ENCODE measurements at regions of chr14 and their contacts with region 1.

Region 1: GRCh38 chr14:96538097-96538989 is 36.2 kb downstream of the PAPOLA start:
- DNase-seq: no peak
- ATAC-seq: no peak
- H3K4me3 ChIP-seq: no peak overlapping the region
- H3K27ac ChIP-seq: no peak overlapping the region; the same call in 1 of the 2 replicates
- H3K4me1 ChIP-seq: no peaks in the 10 kb centered on the region
- H3K27me3 ChIP-seq: no peaks in the 10 kb centered on the region
- CTCF ChIP-seq: no peak
- EP300 ChIP-seq: no peak
- POLR2A ChIP-seq: no peak
- RAD21 ChIP-seq: no peak

Region 2: GRCh38 chr14:96409701-96410100 is 128.6 kb before region 1 on chr14:
- CTCF ChIA-PET with region 1: no interaction called
- POLR2A ChIA-PET with region 1: no interaction called
- RAD21 ChIA-PET with region 1: no interaction called
- SMC1A ChIA-PET with region 1: no interaction called
- in situ Hi-C with region 1: no loop called
- intact Hi-C with region 1: no loop called
- DNase-seq: no peak
- ATAC-seq: no peak
- H3K4me3 ChIP-seq: no peak overlapping the region
- H3K27ac ChIP-seq: no peak overlapping the region
- H3K4me1 ChIP-seq: no peaks in the 10 kb centered on the region
- H3K27me3 ChIP-seq: no peaks in the 10 kb centered on the region
- CTCF ChIP-seq: no peak
- EP300 ChIP-seq: no peak
- POLR2A ChIP-seq: no peak
- RAD21 ChIP-seq: no peak

Region 3: DNA sequence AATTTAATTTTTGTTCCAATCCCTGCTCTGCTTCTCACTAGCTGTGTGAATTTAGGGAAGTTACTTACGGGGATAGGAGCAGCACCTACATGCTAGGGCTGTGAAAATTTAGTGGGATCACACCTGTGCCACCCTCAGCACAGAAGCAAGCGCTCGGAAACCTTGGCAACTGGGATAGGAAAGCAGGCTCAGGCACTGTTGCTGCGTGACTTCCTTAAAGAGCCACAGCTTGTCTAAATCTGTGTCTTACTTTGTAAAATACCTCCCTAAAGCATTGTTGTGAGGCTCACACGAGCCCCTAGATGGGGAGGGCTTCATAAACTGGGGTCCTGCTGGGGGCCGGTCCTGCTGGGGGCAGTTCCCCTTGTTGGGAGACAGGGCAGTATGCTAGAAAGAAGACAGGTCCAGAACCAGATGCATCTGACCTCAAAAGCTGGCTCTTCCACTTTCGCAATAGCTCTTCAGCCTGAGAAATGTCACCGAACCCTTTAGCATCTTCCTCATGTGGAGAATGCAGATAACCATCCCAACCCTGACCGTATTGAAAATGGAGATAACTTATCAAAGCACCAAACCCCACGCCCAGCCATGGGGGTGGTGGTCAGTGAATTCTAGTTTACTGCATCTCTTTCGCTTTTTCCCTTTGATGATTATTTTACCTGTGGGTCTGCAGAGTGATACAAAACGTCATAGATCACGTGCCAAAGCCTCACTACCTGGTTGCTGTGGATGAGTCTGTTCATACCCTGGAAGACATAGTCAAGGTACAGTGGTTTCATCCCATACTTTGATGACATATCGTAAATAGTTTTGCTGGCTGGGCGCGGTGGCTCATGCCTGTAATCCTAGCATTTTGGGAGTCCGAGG is 92.3 kb before region 1 on chr14:
- CTCF ChIA-PET with region 1: no interaction called
- POLR2A ChIA-PET with region 1: no interaction called
- RAD21 ChIA-PET with region 1: no interaction called
- SMC1A ChIA-PET with region 1: no interaction called
- in situ Hi-C with region 1: no loop called
- intact Hi-C with region 1: no loop called
- DNase-seq: no peak
- ATAC-seq: no peak
- H3K4me3 ChIP-seq: no peak overlapping the region
- H3K27ac ChIP-seq: no peak overlapping the region
- H3K4me1 ChIP-seq: no peaks in the 10 kb centered on the region
- H3K27me3 ChIP-seq: no peaks in the 10 kb centered on the region; a peak in 1 of 4 replicates
- CTCF ChIP-seq: no peak
- EP300 ChIP-seq: no peak
- POLR2A ChIP-seq: no peak
- RAD21 ChIP-seq: no peak

Region 4: DNA sequence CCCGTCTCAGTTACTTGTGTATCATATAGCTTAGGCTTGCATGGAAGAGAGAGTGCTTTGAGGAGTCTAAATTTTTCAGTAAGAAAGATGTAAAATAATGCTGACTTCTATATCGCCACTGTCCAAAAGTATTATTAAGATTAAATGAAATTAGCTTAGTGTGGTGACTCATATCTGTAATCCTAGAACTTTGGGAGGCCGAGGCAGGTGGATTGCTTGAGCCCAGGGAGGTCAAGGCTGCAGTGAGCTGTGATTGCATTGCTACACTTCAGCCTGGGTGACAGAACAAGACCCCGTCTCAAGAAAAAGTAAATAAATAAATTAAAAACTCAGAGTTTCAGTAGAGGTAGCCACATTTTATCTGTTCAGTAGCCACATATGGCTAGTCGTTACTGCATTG is 12.9 kb before region 1 on chr14:
- CTCF ChIA-PET with region 1: interaction called, 4 read pairs
- POLR2A ChIA-PET with region 1: no interaction called
- RAD21 ChIA-PET with region 1: no interaction called
- SMC1A ChIA-PET with region 1: interaction called, 12 read pairs
- in situ Hi-C with region 1: no loop called
- intact Hi-C with region 1: no loop called
- DNase-seq: no peak
- ATAC-seq: no peak
- H3K4me3 ChIP-seq: no peak overlapping the region
- H3K27ac ChIP-seq: no peak overlapping the region
- H3K4me1 ChIP-seq: 0 out of 2 replicates have a peak, but pooled peaks cover under 1% of the 10 kb centered on the region
- H3K27me3 ChIP-seq: no peaks in the 10 kb centered on the region
- CTCF ChIP-seq: no peak
- EP300 ChIP-seq: no peak
- POLR2A ChIP-seq: no peak
- RAD21 ChIP-seq: no peak

Region 5: DNA sequence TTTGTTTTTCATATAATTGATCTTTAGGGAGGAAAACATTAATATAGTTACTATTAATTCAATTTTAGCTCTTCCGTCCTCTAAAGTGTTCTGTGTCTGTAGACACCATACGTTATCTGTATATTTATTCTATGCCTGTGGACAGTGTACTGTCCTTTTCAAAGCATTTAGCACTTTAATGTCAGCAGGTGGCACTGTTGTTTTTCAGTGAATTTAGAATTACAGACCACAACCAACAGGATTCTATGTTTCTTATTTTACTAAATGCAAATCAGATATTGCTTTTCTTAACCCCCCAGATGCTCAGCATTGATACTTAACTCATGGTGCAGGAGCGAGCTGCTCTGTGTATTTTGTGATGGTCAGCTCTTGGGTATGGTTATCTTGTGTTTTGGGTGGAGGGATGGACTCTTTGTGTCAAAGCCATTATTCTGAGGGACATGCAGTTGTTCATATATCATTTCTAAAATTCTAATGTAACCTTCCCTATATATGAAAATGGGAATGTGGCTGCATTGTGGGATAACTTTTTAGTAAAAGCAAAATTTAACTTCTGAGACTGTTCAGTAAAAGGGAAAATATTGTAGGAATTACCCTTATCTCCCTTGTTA is 29.1 kb after region 1 on chr14:
- CTCF ChIA-PET with region 1: interaction called, 10 read pairs
- POLR2A ChIA-PET with region 1: no interaction called
- RAD21 ChIA-PET with region 1: interaction called, 3 read pairs
- SMC1A ChIA-PET with region 1: interaction called, 3 read pairs
- in situ Hi-C with region 1: no loop called
- intact Hi-C with region 1: no loop called
- DNase-seq: no peak
- ATAC-seq: peak; percentile 90
- H3K4me3 ChIP-seq: no peak overlapping the region
- H3K27ac ChIP-seq: no peak overlapping the region
- H3K4me1 ChIP-seq: no peaks in the 10 kb centered on the region
- H3K27me3 ChIP-seq: no peaks in the 10 kb centered on the region
- CTCF ChIP-seq: peak; percentile 38 to 50 (median 48); a peak in 5 of 6 replicates
- EP300 ChIP-seq: no peak
- POLR2A ChIP-seq: no peak
- RAD21 ChIP-seq: peak; percentile 55

Region 6: DNA sequence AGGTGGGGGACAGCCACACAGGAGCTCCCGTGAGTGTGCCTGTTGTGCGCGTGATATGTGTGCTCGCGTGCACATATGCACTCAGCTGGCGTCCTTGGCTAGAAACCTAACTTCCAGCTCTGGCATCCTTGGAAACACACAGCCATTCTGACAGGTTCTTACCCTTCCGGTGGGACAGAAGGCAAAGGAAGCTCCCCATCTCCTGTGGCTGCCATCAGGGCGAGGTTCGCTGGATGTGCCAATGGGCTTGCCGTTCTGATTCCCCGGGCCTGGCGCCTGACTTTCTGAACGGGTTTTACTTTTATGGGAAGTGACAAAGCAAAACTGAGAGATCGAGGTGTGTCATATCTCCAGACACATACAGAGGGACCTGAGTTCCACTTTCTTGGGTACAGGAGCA is 88.6 kb after region 1 on chr14:
- CTCF ChIA-PET with region 1: no interaction called
- POLR2A ChIA-PET with region 1: no interaction called
- RAD21 ChIA-PET with region 1: no interaction called
- SMC1A ChIA-PET with region 1: no interaction called
- in situ Hi-C with region 1: no loop called
- intact Hi-C with region 1: no loop called
- DNase-seq: no peak
- ATAC-seq: no peak
- H3K4me3 ChIP-seq: no peak overlapping the region; the same call in 1 of the 2 replicates
- H3K27ac ChIP-seq: no peak overlapping the region
- H3K4me1 ChIP-seq: no peaks in the 10 kb centered on the region
- H3K27me3 ChIP-seq: no peaks in the 10 kb centered on the region
- CTCF ChIP-seq: no peak
- EP300 ChIP-seq: no peak
- POLR2A ChIP-seq: no peak
- RAD21 ChIP-seq: no peak

Measured in GM12878 (cell line).